PC-3 (cell line): ENCODE measurements at regions of chr12 and their contacts with region 1.

Region 1: GRCh38 chr12:26523708-26524150 is 309.3 kb downstream of the ITPR2 start:
- DNase-seq: no peak
- ATAC-seq: no peak
- H3K4me3 ChIP-seq: no peak overlapping the region
- H3K27ac ChIP-seq: no peak overlapping the region
- H3K4me1 ChIP-seq: no peaks in the 10 kb centered on the region
- H3K27me3 ChIP-seq: no peaks in the 10 kb centered on the region
- CTCF ChIP-seq: no peak

Region 2: GRCh38 chr12:26056335-26056734 is 467.4 kb before region 1 on chr12:
- CTCF ChIA-PET with region 1: no interaction called
- POLR2A ChIA-PET with region 1: no interaction called
- intact Hi-C with region 1: no loop called
- DNase-seq: peak; percentile 94
- ATAC-seq: peak; percentile 82
- H3K4me3 ChIP-seq: no peak overlapping the region
- H3K27ac ChIP-seq: no peak overlapping the region
- H3K4me1 ChIP-seq: peaks cover 41% of the 10 kb centered on the region
- H3K27me3 ChIP-seq: no peaks in the 10 kb centered on the region
- CTCF ChIP-seq: no peak

Region 3: GRCh38 chr12:26113853-26114719 is 409.6 kb before region 1 on chr12:
- CTCF ChIA-PET with region 1: no interaction called
- POLR2A ChIA-PET with region 1: no interaction called
- intact Hi-C with region 1: loop called (anchors 10 kb)
- DNase-seq: peak; percentile 94
- ATAC-seq: peak; percentile 83
- H3K4me3 ChIP-seq: peak overlapping the region; percentile 71
- H3K27ac ChIP-seq: peak overlapping the region; percentile 89
- H3K4me1 ChIP-seq: peaks cover 48% of the 10 kb centered on the region
- H3K27me3 ChIP-seq: no peaks in the 10 kb centered on the region
- CTCF ChIP-seq: no peak; the same call in 1 of the 2 replicates